BJ (cell line): ENCODE measurements at regions of chr9 and their contacts with region 1.

Region 1: DNA sequence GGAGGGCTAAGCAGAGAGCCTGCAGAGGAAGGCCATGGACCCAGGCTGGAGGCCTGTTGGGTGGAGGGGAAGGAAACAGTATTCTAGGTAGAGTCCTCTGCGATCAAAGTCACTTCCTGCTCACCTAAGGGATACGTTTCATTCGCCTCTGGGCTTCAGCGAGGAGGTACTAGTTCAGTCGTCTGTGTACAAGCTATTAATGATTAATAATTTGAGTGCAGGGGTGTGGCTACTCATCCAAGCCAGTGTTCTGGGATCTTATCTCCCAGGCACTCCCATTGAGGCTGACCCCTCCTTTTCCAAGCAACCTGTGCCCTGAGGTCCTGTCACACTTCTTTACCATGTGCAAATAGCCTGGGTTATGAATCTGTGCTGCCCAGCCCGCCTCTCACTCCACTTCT is 25.2 kb downstream of the RALGPS1 start:
- DNase-seq: no peak
- H3K4me3 ChIP-seq: no peak overlapping the region
- H3K27me3 ChIP-seq: peaks cover 1% of the 10 kb centered on the region
- CTCF ChIP-seq: no peak

Region 2: DNA sequence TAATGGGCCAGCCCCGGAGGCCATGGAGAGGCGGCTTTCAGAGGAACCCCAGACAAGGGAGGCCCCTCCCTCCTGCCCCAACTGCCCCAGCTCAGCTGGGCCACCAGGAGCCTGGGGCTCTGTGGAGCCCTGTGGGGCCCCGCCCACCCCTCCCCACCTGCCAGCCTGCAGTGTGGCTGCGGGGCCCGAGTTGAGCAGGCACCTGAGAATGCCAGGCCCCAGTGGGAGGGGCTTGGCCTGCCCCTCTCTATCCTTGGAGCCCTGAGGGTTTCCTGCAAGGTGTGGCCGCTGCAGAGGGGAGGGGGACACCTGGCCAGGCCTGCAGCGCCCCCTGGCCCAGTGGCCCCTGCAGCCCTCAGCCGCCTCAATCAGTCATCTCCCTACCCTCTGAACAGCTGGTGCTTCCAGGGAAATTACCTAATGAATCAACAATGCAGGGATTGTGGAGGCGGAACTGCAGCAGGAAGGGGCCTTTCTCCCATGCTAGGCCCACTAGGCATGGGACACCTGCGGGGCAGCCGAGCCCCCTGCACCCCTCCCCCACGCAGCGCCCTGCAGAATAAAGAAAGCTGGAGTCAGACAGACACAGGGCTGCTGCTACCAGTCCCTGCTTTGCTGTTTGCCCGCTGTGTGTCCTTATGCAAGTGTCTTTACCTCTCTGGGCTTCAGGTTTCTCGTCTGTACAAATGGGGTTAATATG is 278.1 kb before region 1 on chr9:
- CTCF ChIA-PET with region 1: no interaction called
- POLR2A ChIA-PET with region 1: no interaction called
- DNase-seq: no peak
- H3K4me3 ChIP-seq: no peak overlapping the region
- H3K27me3 ChIP-seq: peaks cover 1% of the 10 kb centered on the region; the same call in 1 of the 2 replicates
- CTCF ChIP-seq: no peak

Region 3: DNA sequence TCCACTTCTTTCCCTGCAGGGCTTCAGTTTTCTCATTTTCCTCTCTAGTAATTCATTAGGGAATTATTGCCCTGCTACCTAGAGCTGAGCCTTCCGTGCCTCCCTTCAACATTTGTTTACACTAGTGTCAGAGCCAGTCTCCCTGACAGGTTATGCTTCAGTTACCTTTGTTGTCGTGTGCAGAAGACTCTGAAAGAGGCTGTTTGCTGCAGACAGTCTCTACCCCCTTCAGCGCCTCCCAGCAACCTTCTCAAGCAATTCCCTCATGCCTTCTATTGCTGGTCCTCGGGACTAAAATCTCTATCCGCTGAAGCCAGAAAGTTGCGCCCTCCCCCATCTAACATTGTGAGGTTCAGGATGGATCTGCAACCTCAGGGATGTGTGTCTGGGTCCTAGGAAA is 12.4 kb before region 1 on chr9:
- CTCF ChIA-PET with region 1: interaction called, 18 read pairs
- POLR2A ChIA-PET with region 1: no interaction called
- DNase-seq: no peak
- H3K4me3 ChIP-seq: no peak overlapping the region
- H3K27me3 ChIP-seq: peaks cover 12% of the 10 kb centered on the region
- CTCF ChIP-seq: no peak

Region 4: GRCh38 chr9:126965541-126966428 is 26.0 kb after region 1 on chr9:
- CTCF ChIA-PET with region 1: interaction called, 16 read pairs
- POLR2A ChIA-PET with region 1: no interaction called
- DNase-seq: no peak
- H3K4me3 ChIP-seq: no peak overlapping the region
- H3K27me3 ChIP-seq: no peaks in the 10 kb centered on the region; the same call in 1 of the 2 replicates
- CTCF ChIP-seq: peak; percentile 92

Region 5: GRCh38 chr9:127187231-127187956 is 247.6 kb after region 1 on chr9:
- CTCF ChIA-PET with region 1: interaction called, 12 read pairs
- POLR2A ChIA-PET with region 1: no interaction called
- DNase-seq: peak; percentile 96
- H3K4me3 ChIP-seq: no peak overlapping the region
- H3K27me3 ChIP-seq: 0 out of 2 replicates have a peak, but pooled peaks cover 2% of the 10 kb centered on the region
- CTCF ChIP-seq: no peak

Region 6: GRCh38 chr9:127205183-127205470 is 265.3 kb after region 1 on chr9:
- CTCF ChIA-PET with region 1: interaction called, 196 read pairs
- POLR2A ChIA-PET with region 1: no interaction called
- DNase-seq: no peak
- H3K4me3 ChIP-seq: no peak overlapping the region
- H3K27me3 ChIP-seq: peaks cover 1% of the 10 kb centered on the region; the same call in 1 of the 2 replicates
- CTCF ChIP-seq: peak; percentile 52